Activated CD8-positive, alpha-beta T cell treated with anti-CD3 and anti-CD28 coated beads for 36 hours (primary cell): ENCODE measurements at regions of chr3 and their contacts with region 1.

Region 1: GRCh38 chr3:192467230-192468140 is 259.9 kb downstream of the FGF12 start:
- DNase-seq: peak; percentile 55
- ATAC-seq: peak; percentile 90
- H3K4me3 Mint-ChIP-seq: no peak overlapping the region
- H3K27ac Mint-ChIP-seq: no peak overlapping the region
- H3K4me1 Mint-ChIP-seq: no peaks in the 10 kb centered on the region
- H3K27me3 Mint-ChIP-seq: peaks cover 8% of the 10 kb centered on the region
- CTCF ChIP-seq: peak; percentile 80

Region 2: DNA sequence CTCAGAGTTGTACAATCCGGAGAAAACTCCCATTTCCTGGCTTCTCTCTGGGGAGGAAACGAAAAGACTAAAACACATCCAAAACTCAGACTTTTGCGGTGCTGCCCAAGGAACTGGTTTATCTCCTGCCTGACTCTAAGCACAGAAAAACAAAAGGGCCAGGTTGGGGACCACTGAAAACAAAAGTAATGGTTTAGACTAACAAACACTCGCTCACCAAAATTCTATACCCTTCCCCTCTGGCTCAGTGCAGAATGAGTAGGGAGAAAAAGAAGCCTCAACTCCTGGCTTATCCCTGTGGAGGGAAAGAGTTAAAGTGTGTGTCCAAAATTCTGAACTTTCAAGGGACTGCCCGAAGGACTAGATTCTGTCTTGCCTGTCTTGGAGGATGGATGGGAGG is 86.2 kb after region 1 on chr3:
- CTCF ChIA-PET with region 1: no interaction called
- POLR2A ChIA-PET with region 1: no interaction called
- intact Hi-C with region 1: no loop called
- DNase-seq: no peak
- ATAC-seq: no peak
- H3K4me3 Mint-ChIP-seq: no peak overlapping the region
- H3K27ac Mint-ChIP-seq: no peak overlapping the region
- H3K4me1 Mint-ChIP-seq: no peaks in the 10 kb centered on the region
- H3K27me3 Mint-ChIP-seq: peaks cover 2% of the 10 kb centered on the region
- CTCF ChIP-seq: no peak

Region 3: DNA sequence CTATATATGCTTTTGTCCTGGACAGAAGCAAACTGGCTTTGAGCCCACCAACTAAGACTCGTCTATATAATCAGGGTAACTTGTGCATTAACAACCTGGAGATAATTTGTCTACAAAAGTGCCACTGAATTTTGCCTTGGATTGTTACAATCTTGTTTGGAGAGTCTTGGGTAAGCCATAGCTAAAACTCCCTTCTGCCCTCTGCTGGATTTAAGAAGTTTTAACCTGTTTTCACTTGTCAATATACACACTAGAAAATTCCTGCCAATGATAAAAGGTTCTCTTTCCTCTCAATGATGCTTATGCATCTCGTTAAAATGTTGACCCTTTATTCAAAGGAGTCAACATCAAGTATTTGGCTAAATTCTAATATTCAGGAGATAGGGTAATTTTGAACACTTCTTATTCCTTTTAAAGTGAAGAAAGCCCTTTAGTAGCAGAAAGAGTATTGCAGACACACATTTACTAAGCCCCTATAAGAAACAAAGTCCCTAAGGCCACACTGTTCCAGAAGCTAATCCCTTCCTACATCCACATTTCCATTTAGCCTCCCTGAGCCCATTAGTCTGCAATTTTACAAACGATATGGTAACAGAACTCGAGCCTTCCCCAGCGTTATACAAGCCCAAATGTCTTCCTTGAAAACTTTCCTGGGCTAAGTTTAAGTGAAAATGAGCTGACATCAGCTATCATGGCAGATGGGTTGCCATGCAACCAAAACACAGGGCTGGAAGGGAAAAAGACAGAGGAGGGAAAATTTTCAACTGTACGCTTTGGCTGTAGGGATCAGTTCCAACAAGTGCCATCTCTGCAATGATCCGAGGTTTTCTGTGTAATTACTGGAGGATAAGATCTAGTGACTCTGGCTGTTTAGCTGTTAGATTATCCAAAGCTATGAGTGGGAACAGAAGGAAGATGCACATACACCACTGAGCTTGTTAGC is 335.7 kb after region 1 on chr3:
- CTCF ChIA-PET with region 1: no interaction called
- POLR2A ChIA-PET with region 1: no interaction called
- intact Hi-C with region 1: loop called (anchors 5 kb)
- DNase-seq: no peak
- ATAC-seq: no peak
- H3K4me3 Mint-ChIP-seq: no peak overlapping the region
- H3K27ac Mint-ChIP-seq: no peak overlapping the region
- H3K4me1 Mint-ChIP-seq: no peaks in the 10 kb centered on the region
- H3K27me3 Mint-ChIP-seq: no peaks in the 10 kb centered on the region
- CTCF ChIP-seq: peak; percentile 57